ENCODE measurements at regions of chr9 and their contacts with region 1.

Region 1: GRCh38 chr9:129482521-129483414 is 138.1 kb downstream of the C9orf50 start:
- DNase-seq: peak; percentile 51
- ATAC-seq: no peak
- H3K4me3 Mint-ChIP-seq: peak overlapping the region; percentile 60
- H3K27ac Mint-ChIP-seq: peak overlapping the region; percentile 47
- H3K4me1 Mint-ChIP-seq: peaks cover 43% of the 10 kb centered on the region
- H3K27me3 Mint-ChIP-seq: no peaks in the 10 kb centered on the region

Region 2: GRCh38 chr9:129460323-129461261 is 22.2 kb before region 1 on chr9:
- CTCF ChIA-PET with region 1: interaction called, 5 read pairs
- POLR2A ChIA-PET with region 1: interaction called, 5 read pairs
- intact Hi-C with region 1: loop called in 1 of 2 experiments (anchors 1 kb)
- DNase-seq: peak; percentile 96
- ATAC-seq: peak; percentile 87
- H3K4me3 Mint-ChIP-seq: peak overlapping the region; percentile 72
- H3K27ac Mint-ChIP-seq: peak overlapping the region; percentile 92
- H3K4me1 Mint-ChIP-seq: peaks cover 38% of the 10 kb centered on the region
- H3K27me3 Mint-ChIP-seq: no peaks in the 10 kb centered on the region

Region 3: DNA sequence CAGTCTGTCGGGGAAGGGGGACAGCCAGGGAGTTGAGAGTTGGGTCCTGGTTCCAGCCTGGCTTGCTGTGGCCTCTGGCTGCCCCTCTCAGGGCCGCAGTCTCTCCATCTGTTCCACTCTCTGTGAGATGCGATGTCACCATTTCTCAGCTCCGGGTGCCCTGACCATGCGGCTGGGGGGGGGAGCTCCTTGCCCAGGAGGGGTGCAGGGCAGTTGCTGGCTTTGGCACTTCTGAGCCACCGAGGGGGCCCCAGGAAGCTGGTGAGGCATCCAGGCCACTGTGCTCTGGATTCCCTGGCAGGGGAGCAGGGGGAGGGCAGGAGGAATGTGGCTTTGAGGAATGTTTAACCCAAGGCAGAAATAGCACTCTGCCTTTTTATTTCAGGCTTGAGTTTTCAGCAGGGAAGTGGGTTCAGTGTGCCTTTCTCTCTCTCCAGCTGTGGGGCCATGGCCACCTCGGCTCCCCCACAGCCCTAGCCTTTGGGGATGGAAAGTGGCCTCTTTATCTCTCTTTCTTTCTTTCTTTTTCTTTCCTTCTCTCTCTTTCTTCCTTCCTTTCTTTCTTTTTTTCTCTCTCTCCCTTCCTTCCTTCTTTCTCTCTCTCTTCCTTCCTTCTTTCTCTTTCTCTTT is 700.5 kb after region 1 on chr9:
- CTCF ChIA-PET with region 1: no interaction called
- POLR2A ChIA-PET with region 1: no interaction called
- intact Hi-C with region 1: no loop called
- DNase-seq: no peak
- ATAC-seq: no peak
- H3K4me3 Mint-ChIP-seq: no peak overlapping the region
- H3K27ac Mint-ChIP-seq: no peak overlapping the region
- H3K4me1 Mint-ChIP-seq: peaks cover 2% of the 10 kb centered on the region
- H3K27me3 Mint-ChIP-seq: no peaks in the 10 kb centered on the region